K562 (cell line): ENCODE measurements at regions of chr11 and their contacts with region 1.

Region 1: GRCh38 chr11:64152841-64153691 is 12.8 kb downstream of the MACROD1 start:
- DNase-seq: peak; percentile 72 to 94 (median 92)
- ATAC-seq: peak; percentile 97
- H3K4me3 ChIP-seq: no peak overlapping the region
- H3K27ac ChIP-seq: no peak overlapping the region
- H3K4me1 ChIP-seq: peaks cover 6 to 43% of the 10 kb centered on the region in 2 experiments; a peak in 4 of 5 replicates
- H3K27me3 ChIP-seq: no peaks in the 10 kb centered on the region
- CTCF ChIP-seq: peak; percentile 85 to 95 (median 90)
- EP300 ChIP-seq: no peak
- POLR2A ChIP-seq: no peak
- RAD21 ChIP-seq: peak; percentile 61 to 71

Region 2: GRCh38 chr11:63745304-63746170 is 407.5 kb before region 1 on chr11:
- CTCF ChIA-PET with region 1: no interaction called
- POLR2A ChIA-PET with region 1: no interaction called
- in situ Hi-C with region 1: no loop called
- intact Hi-C with region 1: loop called (anchors 10 kb)
- DNase-seq: peak in 1 of 4 experiments; percentile 50
- ATAC-seq: peak; percentile 80
- H3K4me3 ChIP-seq: no peak overlapping the region; the same call in 1 of the 2 replicates
- H3K27ac ChIP-seq: peak overlapping the region; percentile 57
- H3K4me1 ChIP-seq: peaks cover 11 to 25% of the 10 kb centered on the region in 2 experiments; a peak in 4 of 5 replicates
- H3K27me3 ChIP-seq: no peaks in the 10 kb centered on the region
- CTCF ChIP-seq: peak; percentile 40 to 57 (median 50); a peak in 5 of 6 replicates
- EP300 ChIP-seq: no peak
- POLR2A ChIP-seq: no peak
- RAD21 ChIP-seq: peak in 1 of 2 experiments; percentile 19; a peak in 1 of 4 replicates

Region 3: GRCh38 chr11:63768237-63769043 is 384.6 kb before region 1 on chr11 and contains the start of gene ZFTA:
- CTCF ChIA-PET with region 1: no interaction called
- POLR2A ChIA-PET with region 1: no interaction called
- in situ Hi-C with region 1: loop called (anchors 10 kb)
- intact Hi-C with region 1: loop called (anchors 5 kb)
- DNase-seq: peak; percentile 72 to 91 (median 84)
- ATAC-seq: peak; percentile 70
- H3K4me3 ChIP-seq: peak within 1 kb of the TSS; percentile 60
- H3K27ac ChIP-seq: peak within 1 kb of the TSS; percentile 65
- H3K4me1 ChIP-seq: peaks cover 8 to 48% of the 10 kb centered on the region in 2 experiments
- H3K27me3 ChIP-seq: no peaks in the 10 kb centered on the region
- CTCF ChIP-seq: peak in 2 of 3 experiments; percentile 64 to 79; a peak in 5 of 6 replicates
- EP300 ChIP-seq: no peak
- POLR2A ChIP-seq: no peak
- RAD21 ChIP-seq: peak in 1 of 2 experiments; percentile 76; a peak in 3 of 4 replicates
- polyA plus RNA-seq, gene ZFTA: 0.45 TPM

Region 4: GRCh38 chr11:64000026-64000739 is 152.9 kb before region 1 on chr11:
- CTCF ChIA-PET with region 1: no interaction called
- POLR2A ChIA-PET with region 1: no interaction called
- in situ Hi-C with region 1: no loop called
- intact Hi-C with region 1: loop called (anchors 10 kb)
- DNase-seq: no peak
- ATAC-seq: no peak
- H3K4me3 ChIP-seq: no peak overlapping the region
- H3K27ac ChIP-seq: no peak overlapping the region
- H3K4me1 ChIP-seq: peaks cover 0 to 62% of the 10 kb centered on the region in 2 experiments; a peak in 2 of 5 replicates
- H3K27me3 ChIP-seq: no peaks in the 10 kb centered on the region
- CTCF ChIP-seq: no peak
- EP300 ChIP-seq: no peak
- POLR2A ChIP-seq: no peak
- RAD21 ChIP-seq: no peak

Region 5: DNA sequence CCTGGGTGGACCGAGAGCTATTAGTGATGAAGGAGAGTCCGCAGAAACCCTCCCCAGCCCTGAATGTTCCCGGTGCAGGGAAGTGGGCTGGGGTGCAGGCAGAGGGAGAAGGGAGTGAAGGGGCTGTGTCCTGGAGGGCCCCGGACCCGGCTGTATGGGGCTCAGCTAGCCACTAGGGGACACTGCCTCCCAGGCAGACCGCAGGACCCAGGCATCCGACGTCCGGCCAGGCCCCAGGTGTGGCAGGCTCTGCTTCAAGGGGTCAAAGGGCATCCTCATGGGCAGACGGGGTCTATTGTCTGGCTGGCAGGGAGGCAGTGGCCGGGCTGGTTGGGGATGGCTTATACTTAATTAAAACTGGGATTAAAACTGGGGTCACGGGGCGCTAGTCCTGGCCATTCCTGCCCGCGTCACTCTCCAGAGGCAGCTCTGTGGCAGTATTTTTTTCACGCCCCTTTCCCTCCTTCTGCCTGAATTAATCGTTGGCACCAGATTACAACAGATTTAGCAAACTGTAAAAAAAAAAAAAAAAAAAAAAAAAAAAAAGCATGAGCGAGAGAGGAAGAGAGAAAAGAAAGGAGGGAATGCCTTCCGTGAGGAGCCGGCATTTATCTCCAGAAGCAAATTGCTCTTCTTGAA is 112.3 kb before region 1 on chr11:
- CTCF ChIA-PET with region 1: interaction called, 4 read pairs
- POLR2A ChIA-PET with region 1: no interaction called
- in situ Hi-C with region 1: no loop called
- intact Hi-C with region 1: loop called (anchors 5 kb)
- DNase-seq: peak; percentile 37 to 62 (median 52)
- ATAC-seq: peak; percentile 74
- H3K4me3 ChIP-seq: no peak overlapping the region
- H3K27ac ChIP-seq: no peak overlapping the region
- H3K4me1 ChIP-seq: peaks cover 0 to 43% of the 10 kb centered on the region in 2 experiments; a peak in 2 of 5 replicates
- H3K27me3 ChIP-seq: peaks cover 5 to 12% of the 10 kb centered on the region in 2 experiments; a peak in 1 of 5 replicates
- CTCF ChIP-seq: peak; percentile 46 to 59 (median 55); a peak in 3 of 6 replicates
- EP300 ChIP-seq: no peak
- POLR2A ChIP-seq: no peak
- RAD21 ChIP-seq: peak in 1 of 2 experiments; percentile 45; a peak in 2 of 4 replicates

Region 6: DNA sequence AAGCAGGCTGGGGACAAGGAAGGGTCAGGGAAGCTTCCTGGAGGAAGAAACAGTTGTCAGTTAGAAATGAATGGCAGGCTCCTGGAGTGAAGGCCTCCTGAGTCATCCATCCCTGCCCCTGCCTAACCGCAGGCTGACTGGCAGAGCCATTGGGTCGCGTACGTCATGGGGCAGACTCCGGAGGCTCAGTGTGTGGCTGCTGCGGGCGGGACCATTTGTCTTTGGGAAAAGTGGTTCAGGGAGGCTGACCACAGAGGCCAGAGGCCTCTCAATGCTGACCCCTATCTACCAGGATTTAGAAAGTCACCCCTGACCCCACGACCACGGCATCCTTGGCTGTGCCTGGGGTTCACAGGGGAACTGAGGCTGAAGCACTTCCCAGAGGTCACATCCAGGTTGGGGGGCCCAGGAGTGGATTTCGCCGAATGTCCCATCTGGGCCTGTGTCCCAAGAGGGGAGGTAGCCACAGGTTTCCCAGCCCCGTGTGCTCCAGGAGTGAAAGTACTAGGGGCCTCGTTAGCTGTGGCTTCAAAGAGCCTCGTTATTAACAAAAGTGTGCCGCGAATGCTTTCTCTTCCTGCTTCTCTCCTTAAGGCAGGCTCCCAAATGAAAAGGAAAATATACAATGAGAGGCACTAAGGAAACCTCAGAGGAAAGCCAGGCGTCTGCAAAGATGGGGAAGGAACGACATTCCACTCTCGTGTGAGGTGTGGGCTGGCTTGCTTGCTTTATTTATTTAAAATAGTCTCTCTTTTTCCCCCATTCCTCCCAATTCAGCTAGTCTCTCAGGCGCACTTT is 58.4 kb before region 1 on chr11:
- CTCF ChIA-PET with region 1: no interaction called
- POLR2A ChIA-PET with region 1: no interaction called
- in situ Hi-C with region 1: no loop called
- intact Hi-C with region 1: loop called (anchors 5 kb)
- DNase-seq: peak; percentile 56 to 66 (median 60)
- ATAC-seq: peak; percentile 29
- H3K4me3 ChIP-seq: no peak overlapping the region
- H3K27ac ChIP-seq: no peak overlapping the region
- H3K4me1 ChIP-seq: peaks cover 13 to 57% of the 10 kb centered on the region in 2 experiments
- H3K27me3 ChIP-seq: no peaks in the 10 kb centered on the region
- CTCF ChIP-seq: peak; percentile 20 to 43 (median 38); a peak in 5 of 6 replicates
- EP300 ChIP-seq: 0 out of 2 replicates have a peak, but pooled peaks have one; percentile 11
- POLR2A ChIP-seq: no peak
- RAD21 ChIP-seq: peak in 1 of 2 experiments; percentile 29; a peak in 2 of 4 replicates